Posterior vena cava (tissue), 2 donors: ENCODE measurements at regions of chr12 and their contacts with region 1.

Region 1: GRCh38 chr12:121626087-121626852 is at the start of gene ORAI1:
- DNase-seq: peak; percentile 99
- total RNA-seq, gene ORAI1: 10.5 to 13.1 TPM

Region 2: GRCh38 chr12:119964929-119965328 is 1661.3 kb before region 1 on chr12:
- intact Hi-C with region 1: no loop called
- DNase-seq: no peak

Region 3: DNA sequence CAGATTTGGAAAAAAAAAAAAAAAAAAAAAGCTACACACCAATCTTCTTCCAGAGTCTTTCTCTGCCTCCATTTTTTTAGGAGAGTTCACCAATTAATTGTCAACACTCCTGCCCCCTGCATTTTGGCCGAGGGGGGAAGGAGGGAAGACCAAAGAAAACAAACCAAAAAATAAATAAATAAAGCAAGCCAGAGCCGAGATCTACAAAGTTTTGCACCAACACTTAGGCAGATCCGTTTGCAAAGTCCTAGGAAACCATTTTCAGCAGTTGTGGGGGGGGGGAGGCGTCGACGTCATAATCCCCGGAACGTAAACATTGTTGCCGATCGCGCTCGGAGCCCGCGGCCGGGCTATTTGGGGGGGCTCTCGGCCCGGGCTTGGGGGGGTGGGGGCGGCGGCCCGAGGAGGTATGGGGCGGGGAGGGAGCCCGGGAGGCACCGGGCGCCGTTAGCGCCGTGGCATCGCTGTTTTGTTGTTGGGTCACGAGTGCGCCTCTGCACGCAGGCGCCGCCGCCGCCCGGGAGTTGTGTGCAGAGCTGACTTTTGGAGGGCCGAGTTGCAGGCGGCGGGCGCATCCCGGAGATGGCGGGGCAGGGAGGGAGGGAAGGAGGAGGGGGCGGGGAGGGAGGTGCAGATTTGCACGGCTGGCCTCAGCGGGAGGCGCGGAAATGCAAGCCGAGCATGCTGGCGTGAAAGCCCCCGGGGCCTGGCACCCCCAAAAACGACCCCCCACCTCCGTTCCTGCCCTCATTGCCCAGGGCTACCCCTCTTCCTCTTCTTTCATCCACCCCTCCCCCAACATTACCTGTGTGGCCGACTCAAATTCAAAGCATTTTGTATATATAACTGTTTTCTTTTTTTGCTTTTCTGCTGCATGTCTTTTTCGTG is 46.0 kb before region 1 on chr12:
- intact Hi-C with region 1: loop called in 1 of 2 experiments (anchors 5 kb)
- DNase-seq: peak; percentile 91

Region 4: DNA sequence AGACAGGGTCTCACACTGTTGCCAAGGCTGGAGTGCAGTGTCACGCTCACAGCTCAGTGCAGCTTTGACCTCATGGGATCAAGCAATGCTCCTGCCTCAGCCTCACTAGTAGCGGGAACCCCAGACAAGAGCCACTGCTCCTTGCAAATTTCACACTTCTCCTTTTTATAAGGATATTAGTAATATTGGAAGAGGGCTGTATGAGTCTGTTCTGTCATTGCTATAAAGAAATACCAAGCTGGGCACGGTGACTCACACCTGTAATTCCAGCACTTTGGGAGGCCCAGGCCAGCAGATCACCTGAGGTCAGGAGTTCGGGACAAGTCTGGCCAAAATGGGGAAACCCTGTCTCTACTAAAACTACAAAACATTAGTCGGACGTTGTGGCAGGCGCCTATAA is 12.8 kb before region 1 on chr12:
- intact Hi-C with region 1: loop called in 1 of 2 experiments (anchors 1 kb)
- DNase-seq: no peak

Region 5: DNA sequence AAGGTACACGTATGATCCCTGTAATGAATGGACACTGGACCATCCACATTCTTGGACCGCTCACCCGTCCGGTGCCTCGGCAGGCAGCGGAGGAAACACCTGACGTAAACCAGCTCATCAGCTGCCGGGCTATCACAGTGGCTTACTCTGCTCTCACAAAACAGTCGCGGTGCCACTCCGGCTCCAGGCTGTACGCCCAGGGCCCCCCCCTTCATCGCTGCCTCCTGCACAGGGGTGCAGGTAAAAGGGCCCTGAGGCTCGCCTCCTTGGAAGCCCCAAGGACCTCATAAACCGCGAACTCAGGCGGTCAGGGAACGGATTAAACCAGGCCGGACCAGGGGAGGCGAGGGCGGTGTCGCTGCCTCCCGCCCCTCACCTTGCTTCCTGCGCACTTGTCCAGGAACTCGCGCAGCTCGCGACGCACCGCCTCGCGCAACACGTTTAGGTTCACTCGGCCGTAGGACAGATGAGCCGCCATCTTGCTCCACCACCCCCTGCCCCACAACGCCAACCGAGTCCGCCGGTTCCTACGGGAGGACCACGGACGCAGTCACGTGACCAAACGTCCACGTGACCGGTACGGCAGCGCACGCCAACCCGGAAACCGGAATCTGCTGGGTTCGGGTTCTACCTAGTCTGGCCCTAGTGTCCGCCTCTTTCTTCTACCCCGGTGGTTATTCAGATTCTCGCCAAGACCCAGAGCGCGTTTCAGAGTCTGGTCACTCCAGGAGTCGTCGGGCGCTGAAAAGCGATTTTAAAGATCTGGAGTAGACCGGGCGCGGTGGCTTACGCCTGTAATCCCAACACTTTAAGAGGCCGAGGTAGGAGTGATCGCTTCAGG is 639.9 kb after region 1 on chr12 and contains the start of gene VPS33A:
- intact Hi-C with region 1: no loop called
- DNase-seq: peak; percentile 99
- total RNA-seq, gene VPS33A: 12.3 to 12.6 TPM